GM12878 (cell line): ENCODE measurements at regions of chr1 and their contacts with region 1.

Region 1: DNA sequence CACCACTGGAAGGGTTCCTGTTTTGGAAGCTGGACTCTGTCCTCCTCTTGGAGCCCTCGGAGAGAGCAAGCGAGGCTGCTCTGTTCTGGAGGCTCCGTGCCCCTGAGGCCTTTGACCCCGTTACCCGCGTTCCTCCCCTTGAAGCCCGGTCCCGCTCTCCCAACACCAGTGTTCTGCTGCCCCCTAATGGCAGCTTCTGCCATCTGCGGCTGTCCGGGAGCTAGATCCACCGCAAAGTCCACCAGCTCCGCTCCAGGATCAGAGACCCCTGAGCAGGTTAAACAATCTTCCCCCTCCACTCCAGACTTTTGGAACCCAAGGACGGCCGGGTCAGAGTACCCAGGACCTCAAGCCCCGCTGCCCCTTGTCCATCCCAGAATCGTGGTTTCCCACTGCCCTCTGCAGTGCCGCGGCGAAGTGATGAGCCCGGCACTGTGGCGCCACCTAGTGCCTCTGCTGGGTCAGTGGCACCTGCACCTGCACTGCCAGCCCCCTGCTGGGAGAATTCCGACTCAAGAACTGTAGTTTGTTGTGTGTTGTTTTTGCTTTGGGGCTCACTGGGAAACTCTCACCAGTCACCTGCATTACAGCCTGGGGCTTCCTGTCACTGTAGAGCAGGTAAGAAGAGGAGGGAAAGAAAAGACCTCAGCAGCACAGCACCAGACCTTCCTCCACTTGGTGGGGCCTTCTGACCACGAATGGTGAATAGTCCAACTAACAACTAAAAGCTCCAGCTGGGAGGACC is 63.5 kb upstream of the NFASC start:
- DNase-seq: peak; percentile 43
- ATAC-seq: peak; percentile 98
- H3K4me3 ChIP-seq: peak overlapping the region; percentile 49; the same call in 1 of the 2 replicates
- H3K27ac ChIP-seq: no peak overlapping the region
- H3K4me1 ChIP-seq: no peaks in the 10 kb centered on the region
- H3K27me3 ChIP-seq: peaks cover 0 to 6% of the 10 kb centered on the region in 2 experiments; a peak in 2 of 4 replicates
- CTCF ChIP-seq: peak; percentile 82 to 98 (median 93)
- EP300 ChIP-seq: no peak
- POLR2A ChIP-seq: no peak
- RAD21 ChIP-seq: peak; percentile 82

Region 2: DNA sequence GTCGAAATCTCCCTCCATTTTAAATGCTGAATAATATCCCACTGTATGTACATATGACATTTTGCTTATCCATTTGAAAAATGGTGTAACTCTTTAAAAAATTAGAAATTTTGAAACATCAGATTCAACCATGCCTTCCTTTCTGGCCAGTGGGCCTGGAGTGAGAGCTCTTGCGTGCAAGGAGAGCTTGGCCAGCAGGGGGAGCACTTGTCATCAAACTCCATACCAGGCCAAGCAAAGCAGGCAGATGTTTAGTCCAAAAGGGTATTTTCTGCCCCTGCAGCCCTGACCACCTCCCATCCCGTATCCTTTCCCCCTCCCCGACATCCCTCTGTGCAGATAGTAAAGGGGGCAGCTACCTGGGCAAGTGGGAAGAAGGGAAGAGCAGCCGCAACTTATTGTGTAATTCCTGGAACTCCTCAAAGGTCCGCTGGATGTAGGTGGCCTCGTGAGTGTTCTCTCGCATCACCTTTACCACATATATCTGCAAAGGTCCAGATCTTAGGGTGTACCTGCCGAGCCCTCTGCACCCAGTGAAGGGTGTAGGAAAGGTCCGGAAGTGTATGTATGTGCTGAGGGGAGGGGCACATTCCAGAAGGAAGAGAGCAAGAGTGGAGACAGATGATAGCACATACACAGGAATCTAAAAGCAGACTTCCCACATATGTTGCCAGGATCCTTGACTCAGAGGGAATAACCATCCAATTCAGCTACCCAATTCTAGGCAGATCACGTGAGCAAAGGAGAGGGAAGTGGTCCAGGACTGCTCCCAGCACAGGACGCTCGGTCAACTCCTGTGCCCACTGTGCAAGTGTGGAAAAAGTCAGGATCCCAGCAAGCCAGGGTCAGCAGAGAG is 375.6 kb before region 1 on chr1:
- CTCF ChIA-PET with region 1: interaction called, 18 read pairs
- POLR2A ChIA-PET with region 1: no interaction called
- RAD21 ChIA-PET with region 1: interaction called, 11 read pairs
- SMC1A ChIA-PET with region 1: interaction called, 6 read pairs
- in situ Hi-C with region 1: loop called (anchors 10 kb)
- intact Hi-C with region 1: no loop called
- DNase-seq: no peak
- ATAC-seq: peak; percentile 99
- H3K4me3 ChIP-seq: no peak overlapping the region
- H3K27ac ChIP-seq: no peak overlapping the region
- H3K4me1 ChIP-seq: no peaks in the 10 kb centered on the region
- H3K27me3 ChIP-seq: no peaks in the 10 kb centered on the region
- CTCF ChIP-seq: peak; percentile 86 to 95 (median 94)
- EP300 ChIP-seq: no peak
- POLR2A ChIP-seq: no peak
- RAD21 ChIP-seq: peak; percentile 60

Region 3: DNA sequence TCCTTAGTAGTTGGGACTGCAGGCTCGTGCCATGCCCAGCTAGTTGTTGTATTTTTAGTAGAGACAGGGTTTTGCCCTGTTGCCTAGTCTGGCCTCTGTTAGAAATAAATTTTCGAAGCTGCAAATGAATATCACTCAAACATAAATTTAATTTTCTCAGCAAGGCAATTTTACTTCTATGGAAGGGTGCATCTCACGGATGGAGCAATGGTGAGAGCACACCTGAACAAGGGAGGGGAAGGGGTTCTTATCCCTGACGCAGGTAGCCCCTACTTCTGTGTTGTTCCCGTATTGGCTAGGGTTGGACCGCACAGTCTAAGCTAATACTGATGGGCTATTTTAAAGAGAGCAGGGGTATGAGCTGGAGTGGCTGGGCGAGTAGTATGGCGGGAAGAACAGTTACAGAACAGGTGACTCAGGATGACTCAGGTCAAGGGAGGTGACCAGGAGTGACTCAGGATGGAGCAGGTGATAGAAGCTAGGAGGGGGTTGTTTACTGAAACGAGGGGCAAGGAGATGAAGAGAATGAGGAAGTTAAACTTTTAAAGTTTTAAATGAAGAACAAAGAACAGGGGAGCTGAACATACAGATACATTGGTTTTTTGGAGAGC is 283.4 kb before region 1 on chr1:
- CTCF ChIA-PET with region 1: interaction called, 12 read pairs
- POLR2A ChIA-PET with region 1: no interaction called
- RAD21 ChIA-PET with region 1: interaction called, 3 read pairs
- SMC1A ChIA-PET with region 1: no interaction called
- in situ Hi-C with region 1: no loop called
- intact Hi-C with region 1: no loop called
- DNase-seq: no peak
- ATAC-seq: no peak
- H3K4me3 ChIP-seq: no peak overlapping the region
- H3K27ac ChIP-seq: peak overlapping the region; percentile 1; the same call in 1 of the 2 replicates
- H3K4me1 ChIP-seq: peaks cover 35% of the 10 kb centered on the region
- H3K27me3 ChIP-seq: no peaks in the 10 kb centered on the region
- CTCF ChIP-seq: no peak
- EP300 ChIP-seq: no peak
- POLR2A ChIP-seq: no peak
- RAD21 ChIP-seq: no peak

Region 4: GRCh38 chr1:204578867-204579664 is 228.0 kb before region 1 on chr1:
- CTCF ChIA-PET with region 1: interaction called, 279 read pairs
- POLR2A ChIA-PET with region 1: interaction called, 3 read pairs
- RAD21 ChIA-PET with region 1: interaction called, 15 read pairs
- SMC1A ChIA-PET with region 1: interaction called, 7 read pairs
- in situ Hi-C with region 1: no loop called
- intact Hi-C with region 1: no loop called
- DNase-seq: peak; percentile 65
- ATAC-seq: peak; percentile 89
- H3K4me3 ChIP-seq: peak overlapping the region; percentile 52; the same call in 1 of the 2 replicates
- H3K27ac ChIP-seq: peak overlapping the region; percentile 52
- H3K4me1 ChIP-seq: peaks cover 23% of the 10 kb centered on the region
- H3K27me3 ChIP-seq: no peaks in the 10 kb centered on the region
- CTCF ChIP-seq: no peak
- EP300 ChIP-seq: peak in 1 of 2 experiments; percentile 69; a peak in 2 of 4 replicates
- POLR2A ChIP-seq: peak; percentile 37
- RAD21 ChIP-seq: no peak

Region 5: GRCh38 chr1:204653590-204654340 is 153.3 kb before region 1 on chr1:
- CTCF ChIA-PET with region 1: interaction called, 13 read pairs
- POLR2A ChIA-PET with region 1: no interaction called
- RAD21 ChIA-PET with region 1: interaction called, 5 read pairs
- SMC1A ChIA-PET with region 1: no interaction called
- in situ Hi-C with region 1: no loop called
- intact Hi-C with region 1: no loop called
- DNase-seq: no peak
- ATAC-seq: no peak
- H3K4me3 ChIP-seq: no peak overlapping the region
- H3K27ac ChIP-seq: no peak overlapping the region
- H3K4me1 ChIP-seq: no peaks in the 10 kb centered on the region
- H3K27me3 ChIP-seq: no peaks in the 10 kb centered on the region; a peak in 3 of 4 replicates
- CTCF ChIP-seq: no peak
- EP300 ChIP-seq: no peak
- POLR2A ChIP-seq: no peak
- RAD21 ChIP-seq: no peak

Region 6: DNA sequence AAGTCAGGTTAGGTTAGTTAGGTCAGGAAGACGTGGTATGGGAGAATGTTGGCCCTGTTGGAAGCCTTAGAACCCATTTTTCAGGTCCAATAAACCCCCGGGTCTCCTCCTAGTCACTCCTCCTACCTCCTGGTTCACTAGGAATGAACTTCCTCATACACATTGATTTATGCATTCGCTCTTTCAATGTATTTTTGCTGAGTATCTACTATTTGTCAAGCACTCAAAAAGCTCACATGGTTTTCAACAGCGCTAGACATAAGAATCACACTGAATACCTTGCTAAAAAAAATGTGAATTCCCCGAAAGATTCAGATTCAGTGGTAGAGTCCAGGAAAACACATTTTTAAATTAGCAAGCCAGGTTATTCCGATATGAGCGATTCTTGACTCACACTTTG is 35.8 kb before region 1 on chr1:
- CTCF ChIA-PET with region 1: interaction called, 74 read pairs
- POLR2A ChIA-PET with region 1: no interaction called
- RAD21 ChIA-PET with region 1: interaction called, 4 read pairs
- SMC1A ChIA-PET with region 1: interaction called, 36 read pairs
- in situ Hi-C with region 1: no loop called
- intact Hi-C with region 1: no loop called
- DNase-seq: no peak
- ATAC-seq: no peak
- H3K4me3 ChIP-seq: no peak overlapping the region
- H3K27ac ChIP-seq: no peak overlapping the region
- H3K4me1 ChIP-seq: no peaks in the 10 kb centered on the region
- H3K27me3 ChIP-seq: peaks cover 3 to 4% of the 10 kb centered on the region in 2 experiments; a peak in 3 of 4 replicates
- CTCF ChIP-seq: no peak
- EP300 ChIP-seq: no peak
- POLR2A ChIP-seq: no peak
- RAD21 ChIP-seq: no peak

Region 7: GRCh38 chr1:204941421-204942338 is 134.6 kb after region 1 on chr1:
- CTCF ChIA-PET with region 1: interaction called, 33 read pairs
- POLR2A ChIA-PET with region 1: no interaction called
- RAD21 ChIA-PET with region 1: interaction called, 20 read pairs
- SMC1A ChIA-PET with region 1: interaction called, 19 read pairs
- in situ Hi-C with region 1: no loop called
- intact Hi-C with region 1: loop called (anchors 1 kb)
- DNase-seq: no peak
- ATAC-seq: peak; percentile 88
- H3K4me3 ChIP-seq: no peak overlapping the region
- H3K27ac ChIP-seq: no peak overlapping the region
- H3K4me1 ChIP-seq: no peaks in the 10 kb centered on the region
- H3K27me3 ChIP-seq: peaks cover 0 to 6% of the 10 kb centered on the region in 2 experiments; a peak in 3 of 4 replicates
- CTCF ChIP-seq: peak; percentile 81 to 95 (median 91)
- EP300 ChIP-seq: no peak
- POLR2A ChIP-seq: no peak
- RAD21 ChIP-seq: peak; percentile 51

Region 8: GRCh38 chr1:205048382-205048781 is 241.3 kb after region 1 on chr1:
- CTCF ChIA-PET with region 1: no interaction called
- POLR2A ChIA-PET with region 1: no interaction called
- RAD21 ChIA-PET with region 1: no interaction called
- SMC1A ChIA-PET with region 1: no interaction called
- in situ Hi-C with region 1: no loop called
- intact Hi-C with region 1: no loop called
- DNase-seq: no peak
- ATAC-seq: no peak
- H3K4me3 ChIP-seq: no peak overlapping the region
- H3K27ac ChIP-seq: no peak overlapping the region
- H3K4me1 ChIP-seq: no peaks in the 10 kb centered on the region
- H3K27me3 ChIP-seq: peaks cover 0 to 10% of the 10 kb centered on the region in 2 experiments; a peak in 3 of 4 replicates
- CTCF ChIP-seq: no peak
- EP300 ChIP-seq: no peak
- POLR2A ChIP-seq: no peak
- RAD21 ChIP-seq: no peak